Adrenal gland (tissue), 19 donors: ENCODE measurements at regions of chr19 and their contacts with region 1.

Region 1: DNA sequence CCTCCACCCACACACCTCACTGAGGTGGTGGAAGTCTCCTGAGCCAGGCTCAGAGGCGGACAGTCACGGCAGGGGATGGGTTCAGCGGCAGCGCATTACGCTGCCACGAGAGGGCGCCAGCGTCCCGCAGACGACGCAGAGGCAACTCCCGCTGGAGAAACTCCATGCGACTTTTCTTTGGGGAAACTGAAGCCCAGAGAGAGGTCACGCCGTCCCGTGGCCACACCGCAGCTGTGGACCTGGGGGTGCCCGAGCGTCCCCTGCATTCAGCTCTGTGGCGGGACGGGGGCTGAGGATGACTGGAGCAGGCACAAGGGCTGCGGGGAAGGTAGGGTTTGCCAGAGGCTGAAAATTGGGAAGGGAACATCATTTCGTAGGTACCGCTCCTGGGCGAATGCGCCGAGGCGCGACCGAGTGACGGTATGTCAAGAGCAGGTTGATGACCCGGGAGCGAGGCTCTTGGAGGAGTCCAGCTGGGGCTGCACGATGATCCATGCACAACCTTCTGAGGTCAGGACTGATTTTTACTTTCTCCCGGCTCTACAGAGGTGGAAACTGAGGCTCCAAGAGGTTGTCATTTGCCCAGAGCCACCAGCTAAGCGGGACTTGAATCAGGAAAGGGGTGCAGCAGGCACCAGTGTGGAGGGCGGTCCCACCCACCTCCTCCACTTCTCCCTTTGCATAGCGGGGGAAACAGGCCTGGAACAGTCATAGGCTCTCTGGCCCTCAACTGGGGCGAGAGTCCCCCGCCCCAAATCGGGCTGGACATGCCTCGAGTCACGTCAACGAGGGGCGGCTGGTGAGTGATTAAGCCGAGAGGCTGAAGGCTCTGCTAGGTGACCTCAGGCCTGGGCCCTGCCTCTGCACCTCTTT is 690 bp upstream of the ARRDC2 start:
- DNase-seq: peak; percentile 80 to 91 (median 87)
- H3K4me3 ChIP-seq: peak overlapping the region in 3 of 4 donors; percentile 4 to 62 (median 30)
- H3K27ac ChIP-seq: peak overlapping the region in 4 of 5 donors; percentile 71 to 85 (median 84)
- H3K4me1 ChIP-seq: peaks cover 0 to 9% of the 10 kb centered on the region in 2 donors
- H3K27me3 ChIP-seq: no peaks in the 10 kb centered on the region
- CTCF ChIP-seq: peak; percentile 96 to 99 (median 98)
- POLR2A ChIP-seq: peak in 1 of 2 donors; percentile 62

Region 2: GRCh38 chr19:17873786-17874757 is 133.2 kb before region 1 on chr19:
- intact Hi-C with region 1: no loop called
- DNase-seq: peak in 1 of 7 donors; percentile 32
- H3K4me3 ChIP-seq: no peak overlapping the region
- H3K27ac ChIP-seq: no peak overlapping the region
- H3K4me1 ChIP-seq: no peaks in the 10 kb centered on the region
- H3K27me3 ChIP-seq: peaks cover 47% of the 10 kb centered on the region
- CTCF ChIP-seq: no peak
- POLR2A ChIP-seq: no peak

Region 3: DNA sequence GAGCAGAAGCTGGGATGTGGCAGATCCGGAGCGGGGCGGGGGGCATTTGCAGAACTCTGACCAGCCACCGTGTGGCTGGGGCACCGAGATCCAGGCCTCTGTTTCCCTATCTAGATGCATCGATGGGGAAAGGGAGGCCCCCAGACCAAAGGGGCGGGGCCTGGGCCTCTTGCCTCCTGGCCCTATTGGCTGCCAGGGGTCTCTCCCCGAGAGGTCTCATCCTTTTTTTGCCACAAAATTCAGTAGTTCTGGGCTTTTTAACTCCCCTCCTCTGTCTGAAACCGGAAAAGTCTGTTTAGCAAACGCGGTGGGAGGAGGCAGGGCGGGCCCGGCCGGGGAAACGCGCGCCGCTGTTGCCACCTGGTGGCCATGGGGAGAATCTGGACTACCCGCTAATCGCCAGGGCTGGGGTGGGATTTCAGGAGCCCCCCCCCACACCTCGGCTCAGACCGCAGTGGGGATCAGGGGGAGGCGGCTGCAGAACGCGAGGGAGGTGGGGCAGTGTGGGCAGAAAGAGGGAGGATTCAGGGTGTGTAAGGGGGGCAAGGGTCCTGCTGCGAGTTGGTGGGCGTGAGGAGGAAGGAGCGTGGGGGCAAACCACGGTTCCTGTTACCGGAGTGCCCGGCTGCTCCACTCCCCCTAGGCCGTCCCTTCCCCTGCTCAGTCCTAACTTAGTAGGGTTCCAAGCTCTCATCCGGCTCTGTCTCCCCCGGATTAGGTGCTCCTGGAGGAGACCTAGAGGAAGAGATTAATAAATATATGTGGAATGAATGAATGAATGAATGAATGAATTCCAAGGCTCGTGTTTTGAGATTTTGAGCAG is 51.1 kb after region 1 on chr19:
- intact Hi-C with region 1: loop called (anchors 1 to 2 kb)
- DNase-seq: peak; percentile 72 to 82 (median 76)
- H3K4me3 ChIP-seq: no peak overlapping the region
- H3K27ac ChIP-seq: peak overlapping the region in 4 of 5 donors; percentile 58 to 76 (median 62)
- H3K4me1 ChIP-seq: peaks cover 6 to 12% of the 10 kb centered on the region in 2 donors
- H3K27me3 ChIP-seq: no peaks in the 10 kb centered on the region
- CTCF ChIP-seq: peak; percentile 80 to 99 (median 94)
- POLR2A ChIP-seq: no peak